ENCODE measurements at regions of chr7 and their contacts with region 1.

Region 1: DNA sequence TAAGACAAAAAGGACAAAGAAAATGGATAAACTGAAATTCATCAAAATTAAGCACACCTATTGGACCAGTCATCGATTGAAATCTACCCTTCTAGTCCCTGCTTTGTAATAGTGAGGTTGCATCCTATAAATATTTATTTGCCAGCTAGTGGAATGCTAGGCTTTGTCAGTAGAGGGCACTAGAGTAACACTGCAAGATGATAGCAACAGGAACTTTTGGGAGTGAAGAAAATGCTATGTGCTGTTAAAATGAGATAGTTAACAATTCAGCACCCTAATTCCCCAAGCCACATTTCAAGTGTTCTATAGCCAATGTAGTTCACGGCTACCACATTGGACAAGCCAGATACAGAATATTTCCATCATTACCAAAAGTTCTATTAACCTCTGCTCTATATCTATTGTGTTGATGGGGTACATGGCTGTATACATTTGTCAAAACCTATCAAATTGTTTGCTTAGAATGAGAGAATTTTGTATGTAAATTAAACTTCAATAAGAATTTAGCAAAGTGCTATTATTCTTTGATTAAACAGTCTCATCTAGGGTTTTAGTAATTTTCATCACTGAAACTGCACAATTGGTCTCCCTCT is 69.8 kb downstream of the LSMEM1 start:
- DNase-seq: peak; percentile 71
- H3K4me3 ChIP-seq: no peak overlapping the region
- H3K27ac ChIP-seq: no peak overlapping the region
- H3K4me1 ChIP-seq: no peaks in the 10 kb centered on the region
- CTCF ChIP-seq: peak; percentile 99

Region 2: GRCh38 chr7:112869111-112869757 is 318.7 kb after region 1 on chr7:
- CTCF ChIA-PET with region 1: no interaction called
- POLR2A ChIA-PET with region 1: no interaction called
- intact Hi-C with region 1: loop called (anchors 1 kb)
- DNase-seq: peak; percentile 59
- H3K4me3 ChIP-seq: no peak overlapping the region
- H3K27ac ChIP-seq: no peak overlapping the region
- H3K4me1 ChIP-seq: peaks cover 17% of the 10 kb centered on the region
- CTCF ChIP-seq: peak; percentile 98

Region 3: GRCh38 chr7:112898432-112899290 is 348.1 kb after region 1 on chr7:
- CTCF ChIA-PET with region 1: no interaction called
- POLR2A ChIA-PET with region 1: no interaction called
- intact Hi-C with region 1: loop called (anchors 1 kb)
- DNase-seq: peak; percentile 59
- H3K4me3 ChIP-seq: no peak overlapping the region
- H3K27ac ChIP-seq: no peak overlapping the region
- H3K4me1 ChIP-seq: no peaks in the 10 kb centered on the region
- CTCF ChIP-seq: peak; percentile 95

Region 4: GRCh38 chr7:113710310-113711106 is 1159.9 kb after region 1 on chr7:
- CTCF ChIA-PET with region 1: no interaction called
- POLR2A ChIA-PET with region 1: no interaction called
- intact Hi-C with region 1: loop called (anchors 10 kb)
- DNase-seq: peak; percentile 78
- H3K4me3 ChIP-seq: no peak overlapping the region
- H3K27ac ChIP-seq: no peak overlapping the region
- H3K4me1 ChIP-seq: no peaks in the 10 kb centered on the region
- CTCF ChIP-seq: peak; percentile 97

Measured in OCI-LY7 (cell line).